ENCODE measurements at regions of chr3 and their contacts with region 1.

Region 1: DNA sequence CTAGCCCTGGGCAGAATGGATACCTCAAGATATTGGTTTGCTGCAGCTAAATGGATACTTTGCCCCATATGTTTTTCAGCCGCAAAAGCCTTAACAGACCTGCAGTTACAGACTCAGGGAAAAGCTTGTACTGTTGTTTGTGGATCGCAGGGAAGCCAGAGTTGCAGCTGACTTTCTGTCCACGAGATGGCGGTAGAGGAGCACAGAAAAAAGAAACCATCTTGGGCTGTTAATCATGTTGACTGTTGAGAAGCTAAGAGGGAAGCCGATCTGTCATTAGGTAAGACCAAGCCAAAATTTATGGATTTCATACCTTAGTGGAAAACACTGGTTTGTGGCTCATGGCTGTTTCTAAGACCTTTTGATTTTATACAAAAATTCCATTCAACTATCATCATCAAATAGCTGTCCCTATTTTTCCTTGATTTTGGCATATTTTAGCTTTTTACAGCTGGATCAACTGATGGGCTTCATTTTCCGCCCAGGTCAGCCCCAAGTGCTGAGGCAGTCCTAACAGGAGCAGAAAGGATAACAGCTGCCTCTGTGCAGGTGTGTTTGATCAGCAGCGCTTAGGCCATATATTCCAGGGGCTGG is 205.7 kb upstream of the ZPLD1 start:
- DNase-seq: peak; percentile 61
- ATAC-seq: peak; percentile 78
- H3K4me3 ChIP-seq: no peak overlapping the region
- H3K27ac ChIP-seq: no peak overlapping the region
- H3K4me1 ChIP-seq: peaks cover 6% of the 10 kb centered on the region; the same call in 1 of the 2 replicates
- H3K27me3 ChIP-seq: no peaks in the 10 kb centered on the region
- CTCF ChIP-seq: peak; percentile 89 to 93 (median 91)
- EP300 ChIP-seq: no peak
- POLR2A ChIP-seq: no peak
- RAD21 ChIP-seq: peak; percentile 98

Region 2: DNA sequence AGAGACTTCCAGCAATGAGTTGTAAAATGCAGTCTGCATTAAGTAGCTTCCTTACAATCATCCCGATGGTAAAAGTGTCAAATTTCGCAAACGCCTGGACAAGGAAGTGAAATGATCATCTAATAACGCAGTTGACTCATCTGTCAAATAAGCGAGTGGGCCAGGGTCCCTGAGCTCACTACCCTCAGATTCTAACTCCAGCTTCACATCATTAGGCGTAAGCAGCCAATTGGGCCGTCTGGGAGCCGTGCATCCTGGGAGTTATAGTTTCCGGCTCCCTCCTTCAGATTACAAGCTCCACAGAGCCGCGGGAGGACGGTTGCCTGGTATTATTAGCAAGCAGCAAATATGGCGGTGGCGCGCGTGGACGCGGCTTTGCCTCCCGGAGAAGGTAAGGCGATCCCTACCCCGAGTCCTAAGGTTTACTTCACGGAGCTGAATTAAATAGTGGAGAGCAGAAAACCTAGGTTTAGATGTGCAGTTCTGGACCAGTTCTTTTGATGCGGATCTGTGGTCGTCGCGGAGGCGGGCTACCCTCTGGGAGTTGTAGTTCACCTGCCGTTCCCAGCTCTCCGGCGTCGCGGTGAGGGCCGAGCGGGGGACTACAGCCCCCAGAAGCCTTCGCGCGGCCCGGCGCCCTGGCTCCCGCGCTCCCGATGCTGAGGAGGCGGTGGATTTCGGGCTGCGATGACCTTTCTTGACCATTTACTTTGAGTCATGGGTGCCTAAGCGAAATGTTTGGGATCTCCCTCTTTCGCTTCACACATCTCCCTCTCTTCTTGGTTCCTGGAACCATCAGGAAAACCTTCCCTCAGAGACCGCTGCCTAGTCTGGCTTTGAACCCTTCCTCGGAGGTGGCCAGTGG is 504.6 kb before region 1 on chr3 and contains the start of gene CEP97:
- CTCF ChIA-PET with region 1: interaction called, 5 read pairs
- POLR2A ChIA-PET with region 1: no interaction called
- RAD21 ChIA-PET with region 1: interaction called, 6 read pairs
- SMC1A ChIA-PET with region 1: interaction called, 15 read pairs
- in situ Hi-C with region 1: no loop called
- intact Hi-C with region 1: no loop called
- DNase-seq: peak; percentile 78
- ATAC-seq: peak; percentile 95
- H3K4me3 ChIP-seq: peak within 1 kb of the TSS; percentile 79
- H3K27ac ChIP-seq: peak within 1 kb of the TSS; percentile 38
- H3K4me1 ChIP-seq: peaks cover 15% of the 10 kb centered on the region
- H3K27me3 ChIP-seq: no peaks in the 10 kb centered on the region
- CTCF ChIP-seq: no peak
- EP300 ChIP-seq: no peak
- POLR2A ChIP-seq: peak; percentile 52; the same call in 1 of the 2 replicates
- RAD21 ChIP-seq: no peak
- polyA plus RNA-seq, gene CEP97: 1.9 to 4.3 TPM

Region 3: GRCh38 chr3:101836652-101837598 is 392.2 kb before region 1 on chr3:
- CTCF ChIA-PET with region 1: interaction called, 23 read pairs
- POLR2A ChIA-PET with region 1: no interaction called
- RAD21 ChIA-PET with region 1: interaction called, 17 read pairs
- SMC1A ChIA-PET with region 1: interaction called, 9 read pairs
- in situ Hi-C with region 1: no loop called
- intact Hi-C with region 1: no loop called
- DNase-seq: no peak
- ATAC-seq: peak; percentile 35
- H3K4me3 ChIP-seq: peak overlapping the region; percentile 32; the same call in 1 of the 2 replicates
- H3K27ac ChIP-seq: 0 out of 2 replicates have a peak overlapping the region, but pooled peaks have one; percentile 27
- H3K4me1 ChIP-seq: peaks cover 40% of the 10 kb centered on the region
- H3K27me3 ChIP-seq: no peaks in the 10 kb centered on the region
- CTCF ChIP-seq: no peak
- EP300 ChIP-seq: peak in 1 of 2 experiments; percentile 19; a peak in 1 of 4 replicates
- POLR2A ChIP-seq: no peak
- RAD21 ChIP-seq: no peak

Region 4: DNA sequence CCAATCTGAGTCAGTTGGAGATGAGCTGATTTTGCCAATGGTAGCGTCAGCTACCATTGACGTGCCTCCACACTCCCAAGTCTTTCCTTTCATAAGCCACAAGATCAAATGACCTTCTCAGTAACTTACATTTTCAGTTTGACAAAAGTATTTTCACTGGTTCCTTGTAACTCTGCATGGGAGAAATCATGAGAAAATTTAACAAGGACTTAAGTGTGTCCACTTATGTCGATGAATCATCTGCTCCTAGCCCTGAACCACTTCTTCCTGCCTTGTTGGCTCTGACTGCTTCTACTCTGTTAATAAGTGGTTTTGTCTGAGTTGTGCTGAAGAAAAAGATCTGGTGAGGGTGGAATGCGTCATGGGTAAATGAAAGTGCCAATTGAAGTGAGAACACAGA is 278.6 kb before region 1 on chr3:
- CTCF ChIA-PET with region 1: interaction called, 13 read pairs
- POLR2A ChIA-PET with region 1: no interaction called
- RAD21 ChIA-PET with region 1: interaction called, 4 read pairs
- SMC1A ChIA-PET with region 1: interaction called, 18 read pairs
- in situ Hi-C with region 1: no loop called
- intact Hi-C with region 1: no loop called
- DNase-seq: peak; percentile 87
- ATAC-seq: peak; percentile 92
- H3K4me3 ChIP-seq: no peak overlapping the region
- H3K27ac ChIP-seq: no peak overlapping the region
- H3K4me1 ChIP-seq: no peaks in the 10 kb centered on the region
- H3K27me3 ChIP-seq: no peaks in the 10 kb centered on the region
- CTCF ChIP-seq: no peak
- EP300 ChIP-seq: peak in 1 of 2 experiments; percentile 49; a peak in 1 of 4 replicates
- POLR2A ChIP-seq: no peak
- RAD21 ChIP-seq: no peak

Region 5: GRCh38 chr3:102038477-102039142 is 190.5 kb before region 1 on chr3:
- CTCF ChIA-PET with region 1: interaction called, 19 read pairs
- POLR2A ChIA-PET with region 1: no interaction called
- RAD21 ChIA-PET with region 1: interaction called, 21 read pairs
- SMC1A ChIA-PET with region 1: interaction called, 12 read pairs
- in situ Hi-C with region 1: no loop called
- intact Hi-C with region 1: no loop called
- DNase-seq: peak; percentile 94
- ATAC-seq: peak; percentile 88
- H3K4me3 ChIP-seq: no peak overlapping the region
- H3K27ac ChIP-seq: peak overlapping the region; percentile 74
- H3K4me1 ChIP-seq: peaks cover 51% of the 10 kb centered on the region
- H3K27me3 ChIP-seq: no peaks in the 10 kb centered on the region
- CTCF ChIP-seq: no peak
- EP300 ChIP-seq: peak; percentile 87 to 94
- POLR2A ChIP-seq: no peak
- RAD21 ChIP-seq: no peak

Region 6: GRCh38 chr3:102529452-102529851 is 300.3 kb after region 1 on chr3:
- CTCF ChIA-PET with region 1: interaction called, 314 read pairs
- POLR2A ChIA-PET with region 1: no interaction called
- RAD21 ChIA-PET with region 1: interaction called, 177 read pairs
- SMC1A ChIA-PET with region 1: interaction called, 158 read pairs
- in situ Hi-C with region 1: no loop called
- intact Hi-C with region 1: no loop called
- DNase-seq: no peak
- ATAC-seq: no peak
- H3K4me3 ChIP-seq: no peak overlapping the region
- H3K27ac ChIP-seq: no peak overlapping the region
- H3K4me1 ChIP-seq: no peaks in the 10 kb centered on the region
- H3K27me3 ChIP-seq: no peaks in the 10 kb centered on the region; a peak in 1 of 4 replicates
- CTCF ChIP-seq: peak in 2 of 3 experiments; percentile 13 to 22; a peak in 1 of 6 replicates
- EP300 ChIP-seq: no peak
- POLR2A ChIP-seq: no peak
- RAD21 ChIP-seq: 0 out of 2 replicates have a peak, but pooled peaks have one; percentile 27

Measured in GM12878 (cell line).